ENCODE measurements at regions of chr17 and their contacts with region 1.

Region 1: GRCh38 chr17:9575381-9576101 is at the start of gene STX8:
- DNase-seq: peak; percentile 74
- ATAC-seq: peak; percentile 87
- H3K4me3 ChIP-seq: peak within 1 kb of the TSS; percentile 78 to 97
- H3K27ac ChIP-seq: peak within 1 kb of the TSS; percentile 51
- H3K4me1 ChIP-seq: peaks cover 5 to 15% of the 10 kb centered on the region in 2 experiments; a peak in 3 of 4 replicates
- H3K27me3 ChIP-seq: no peaks in the 10 kb centered on the region
- CTCF ChIP-seq: no peak
- POLR2A ChIP-seq: no peak
- RAD21 ChIP-seq: no peak
- total RNA-seq, gene STX8: 38.8 TPM

Region 2: GRCh38 chr17:9644910-9645751 is 69.6 kb after region 1 on chr17 and contains the start of gene USP43:
- CTCF ChIA-PET with region 1: no interaction called
- POLR2A ChIA-PET with region 1: no interaction called
- RAD21 ChIA-PET with region 1: interaction called in 1 of 2 experiments, 3 read pairs
- intact Hi-C with region 1: loop called (anchors 2 kb)
- DNase-seq: peak; percentile 32
- ATAC-seq: peak; percentile 83
- H3K4me3 ChIP-seq: peak within 1 kb of the TSS; percentile 71 to 75
- H3K27ac ChIP-seq: peak within 1 kb of the TSS; percentile 94
- H3K4me1 ChIP-seq: peaks cover 37 to 51% of the 10 kb centered on the region in 2 experiments
- H3K27me3 ChIP-seq: no peaks in the 10 kb centered on the region
- CTCF ChIP-seq: no peak
- POLR2A ChIP-seq: no peak
- RAD21 ChIP-seq: no peak; the same call in 1 of the 2 replicates
- total RNA-seq, gene USP43: 8.0 TPM

Region 3: DNA sequence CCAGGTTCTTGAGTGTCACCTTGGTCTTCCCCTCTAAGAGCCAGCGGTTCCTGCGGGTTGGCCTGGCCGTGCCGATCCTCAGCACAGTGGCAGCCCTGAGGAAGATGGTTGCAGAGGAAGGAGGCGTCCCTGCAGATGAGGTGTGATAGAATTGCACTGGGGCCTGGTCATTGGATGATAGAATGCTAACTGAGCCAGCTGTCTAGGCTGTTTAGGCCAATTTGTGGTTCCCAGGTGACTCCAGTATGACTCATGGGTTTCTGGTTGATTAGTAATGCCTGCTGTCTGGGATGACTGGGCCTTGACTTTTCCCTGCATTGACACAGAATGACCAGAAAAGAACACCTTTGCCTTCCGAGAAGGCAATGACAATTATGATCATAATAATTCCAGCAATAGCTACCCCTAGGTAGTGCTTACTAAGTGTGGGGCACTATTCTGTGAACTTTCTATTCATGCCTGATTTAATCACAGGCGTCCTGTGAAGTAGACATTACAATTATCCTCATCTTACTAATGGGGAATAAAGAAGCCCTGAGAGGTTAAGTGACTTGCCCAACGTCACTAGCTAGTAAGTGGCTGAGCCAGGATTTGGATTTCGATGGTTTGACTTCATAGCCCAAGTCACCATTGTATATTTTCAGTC is 101.3 kb after region 1 on chr17:
- CTCF ChIA-PET with region 1: interaction called, 7 read pairs
- POLR2A ChIA-PET with region 1: no interaction called
- RAD21 ChIA-PET with region 1: interaction called in 1 of 2 experiments, 4 read pairs
- intact Hi-C with region 1: loop called (anchors 1 kb)
- DNase-seq: peak; percentile 91
- ATAC-seq: peak; percentile 95
- H3K4me3 ChIP-seq: no peak overlapping the region
- H3K27ac ChIP-seq: peak overlapping the region; percentile 47
- H3K4me1 ChIP-seq: peaks cover 13 to 23% of the 10 kb centered on the region in 2 experiments
- H3K27me3 ChIP-seq: no peaks in the 10 kb centered on the region
- CTCF ChIP-seq: no peak
- POLR2A ChIP-seq: no peak
- RAD21 ChIP-seq: no peak

Measured in HCT116 (cell line).